ENCODE measurements at regions of chr14 and their contacts with region 1.

Region 1: DNA sequence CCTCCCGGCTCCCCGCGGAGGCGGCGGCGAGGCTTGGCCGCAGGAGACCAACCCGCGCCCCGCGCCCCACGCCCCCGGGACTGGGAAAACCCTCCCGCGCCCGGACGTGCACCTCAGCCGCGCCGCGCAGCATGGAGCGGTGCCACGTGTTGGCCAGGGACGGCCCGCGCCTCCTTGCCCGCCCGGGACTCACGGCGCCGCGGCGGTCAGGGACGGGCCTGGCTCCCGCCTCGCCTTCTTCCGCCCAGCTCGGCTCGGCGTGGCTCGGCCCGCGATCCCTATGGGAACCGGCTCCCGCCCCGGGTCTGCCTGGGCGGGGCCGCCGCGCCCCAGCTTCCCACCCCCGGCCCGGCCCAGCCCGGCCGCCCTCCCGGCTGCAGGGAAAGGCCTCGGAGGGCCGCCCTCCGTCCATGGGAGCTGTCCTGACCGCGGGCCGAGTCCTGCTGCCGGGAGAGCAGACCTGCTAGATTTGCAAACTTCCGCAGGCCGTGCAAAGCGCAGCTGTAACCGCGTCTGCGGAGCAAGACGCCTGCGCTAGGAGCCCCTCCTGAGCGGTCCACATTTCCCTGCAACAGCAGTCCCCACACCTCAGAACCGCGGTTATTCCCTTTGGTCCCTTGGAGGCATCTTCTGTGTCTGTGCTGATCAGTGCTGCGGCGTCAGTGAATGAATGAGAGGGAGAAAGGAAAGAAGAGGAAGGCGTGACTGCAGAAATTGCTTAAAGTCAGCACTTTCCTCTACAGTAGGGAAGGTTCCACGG is at the start of gene CDKL1:
- DNase-seq: peak; percentile 76
- H3K4me3 ChIP-seq: peak within 1 kb of the TSS; percentile 60 to 67 (median 67)
- H3K27ac ChIP-seq: peak within 1 kb of the TSS; percentile 96
- H3K4me1 ChIP-seq: peaks cover 12% of the 10 kb centered on the region
- H3K27me3 ChIP-seq: no peaks in the 10 kb centered on the region
- CTCF ChIP-seq: no peak
- total RNA-seq, gene CDKL1: 13.7 to 14.1 TPM

Region 2: DNA sequence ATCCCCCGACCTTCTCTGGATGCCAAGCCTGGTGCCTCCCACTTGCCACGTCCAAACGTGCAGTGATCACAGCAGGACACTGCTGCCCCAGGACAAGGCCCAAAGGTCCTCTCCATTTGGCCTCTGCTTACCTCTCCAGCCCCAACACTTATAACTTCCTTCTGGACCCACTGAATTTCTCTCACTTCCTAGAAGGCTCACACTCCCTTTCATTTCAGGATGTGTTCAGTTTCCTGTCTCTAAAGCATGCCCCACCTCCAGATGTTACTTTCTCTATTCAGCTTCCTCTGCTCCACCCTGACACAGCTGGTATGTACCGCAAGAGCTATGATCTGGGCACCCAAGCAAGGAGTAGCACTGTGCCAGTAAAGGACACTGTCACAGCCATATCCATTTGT is 33.1 kb before region 1 on chr14:
- CTCF ChIA-PET with region 1: no interaction called
- dilution Hi-C with region 1: no loop called
- in situ Hi-C with region 1: no loop called
- intact Hi-C with region 1: loop called (anchors 5 kb)
- DNase-seq: no peak
- H3K4me3 ChIP-seq: no peak overlapping the region
- H3K27ac ChIP-seq: no peak overlapping the region
- H3K4me1 ChIP-seq: peaks cover 27% of the 10 kb centered on the region
- H3K27me3 ChIP-seq: no peaks in the 10 kb centered on the region
- CTCF ChIP-seq: no peak